Activated B cell treated with CpG ODN at 0.5 μM for 24 hours (primary cell): ENCODE measurements at regions of chr6 and their contacts with region 1.

Region 1: GRCh38 chr6:85678602-85679444 is 36.1 kb upstream of the SYNCRIP start:
- DNase-seq: peak; percentile 96
- ATAC-seq: peak; percentile 87
- H3K4me3 Mint-ChIP-seq: peak overlapping the region; percentile 99
- H3K27ac Mint-ChIP-seq: peak overlapping the region; percentile 98
- H3K4me1 Mint-ChIP-seq: peaks cover 48% of the 10 kb centered on the region
- H3K27me3 Mint-ChIP-seq: no peaks in the 10 kb centered on the region
- CTCF ChIP-seq: no peak

Region 2: DNA sequence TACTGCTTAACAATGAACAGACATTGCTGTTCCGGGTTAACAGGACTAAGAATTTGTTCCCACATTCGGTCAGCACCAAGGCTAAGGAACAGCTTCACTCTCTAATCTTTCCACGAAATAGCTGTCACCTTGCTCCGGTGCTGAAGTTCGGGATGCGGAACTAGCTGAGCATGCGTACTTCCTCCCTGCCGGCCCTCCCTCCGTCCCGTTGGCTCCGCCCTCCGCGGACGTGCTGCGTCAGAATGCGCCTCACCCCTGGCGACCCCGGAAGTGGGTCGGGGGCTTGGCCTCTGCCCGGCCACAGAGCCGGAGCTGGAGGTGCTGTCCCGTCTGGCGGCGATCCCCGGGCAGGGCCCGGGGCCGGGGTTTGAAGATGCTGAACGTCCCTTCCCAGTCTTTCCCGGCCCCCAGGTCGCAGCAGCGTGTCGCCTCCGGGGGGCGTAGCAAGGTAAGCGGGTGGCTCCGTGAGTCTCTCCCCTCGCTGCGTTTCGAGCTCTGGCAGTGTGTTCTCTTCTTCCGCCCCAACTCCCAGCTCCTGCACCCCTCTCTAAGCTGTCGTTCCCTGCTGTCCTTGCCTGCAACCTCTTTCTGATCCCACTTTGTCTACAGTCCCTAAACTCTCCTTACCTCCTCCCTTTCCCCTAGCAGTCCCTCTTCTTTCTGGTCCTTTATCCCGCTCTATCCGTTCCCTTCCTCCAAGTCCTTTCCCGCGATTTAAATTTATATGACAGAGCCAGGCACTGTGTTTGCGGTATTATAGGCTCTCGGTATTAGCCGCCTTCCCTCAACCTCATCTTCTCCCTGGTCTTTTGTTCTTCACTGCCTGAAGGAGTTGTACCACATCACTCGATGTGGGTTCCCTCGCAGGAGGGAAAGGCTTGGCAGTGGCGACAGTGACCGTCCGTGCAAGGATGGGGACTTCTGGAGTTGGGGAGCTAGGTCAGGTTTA is 1819.1 kb before region 1 on chr6 and contains the start of gene CYB5R4:
- CTCF ChIA-PET with region 1: no interaction called
- POLR2A ChIA-PET with region 1: interaction called, 6 read pairs
- intact Hi-C with region 1: loop called (anchors 2 kb)
- DNase-seq: peak; percentile 93
- ATAC-seq: peak; percentile 97
- H3K4me3 Mint-ChIP-seq: peak within 1 kb of the TSS; percentile 98
- H3K27ac Mint-ChIP-seq: peak within 1 kb of the TSS; percentile 86
- H3K4me1 Mint-ChIP-seq: peaks cover 50% of the 10 kb centered on the region
- H3K27me3 Mint-ChIP-seq: peaks cover 13% of the 10 kb centered on the region
- CTCF ChIP-seq: no peak
- total RNA-seq, gene CYB5R4: 35.7 and 37.3 TPM in 2 replicates

Region 3: DNA sequence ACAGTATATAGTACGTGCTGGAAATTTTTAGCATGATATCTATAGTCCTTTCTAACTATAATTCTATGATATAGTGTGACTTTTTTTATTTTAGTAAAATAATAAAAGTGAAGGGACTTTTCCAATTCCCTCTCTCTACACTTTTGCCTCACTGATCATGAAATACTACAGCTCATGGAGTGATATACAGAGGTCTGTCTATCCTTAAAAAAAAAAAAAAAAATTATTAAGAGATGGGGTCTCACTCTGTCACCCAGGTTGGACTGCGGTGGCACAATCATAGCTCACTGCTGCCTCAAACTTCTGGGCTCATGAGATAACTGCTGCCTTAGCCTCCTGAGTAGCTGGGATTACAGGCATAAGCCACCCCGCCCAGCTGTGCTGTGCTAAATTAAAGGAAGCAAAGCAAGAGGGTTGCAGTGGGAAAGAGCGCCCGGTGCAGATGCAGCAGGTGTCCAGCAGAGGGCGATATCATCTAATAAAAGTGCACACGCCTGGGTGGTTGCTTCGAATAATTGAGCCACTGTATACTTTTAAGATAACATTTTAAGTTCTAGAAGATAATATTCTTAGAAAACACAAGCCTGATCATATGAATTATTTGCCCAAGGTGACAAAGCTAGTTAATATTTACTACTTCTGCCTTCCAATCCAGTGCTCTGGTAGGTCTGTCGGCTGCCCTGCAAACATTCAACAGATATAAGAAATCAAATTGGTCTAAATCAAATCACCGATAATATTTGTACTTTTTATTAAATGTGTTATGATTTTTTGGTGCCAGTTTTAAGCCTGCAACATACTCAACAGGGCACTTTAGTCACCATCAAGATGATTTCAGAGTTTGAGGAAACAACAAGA is 323.8 kb before region 1 on chr6:
- CTCF ChIA-PET with region 1: interaction called, 4 read pairs
- POLR2A ChIA-PET with region 1: no interaction called
- intact Hi-C with region 1: loop called (anchors 5 kb)
- DNase-seq: peak; percentile 43
- ATAC-seq: peak; percentile 68
- H3K4me3 Mint-ChIP-seq: no peak overlapping the region
- H3K27ac Mint-ChIP-seq: no peak overlapping the region
- H3K4me1 Mint-ChIP-seq: no peaks in the 10 kb centered on the region
- H3K27me3 Mint-ChIP-seq: peaks cover 6% of the 10 kb centered on the region
- CTCF ChIP-seq: peak; percentile 92

Region 4: GRCh38 chr6:85537055-85537494 is 141.7 kb before region 1 on chr6:
- CTCF ChIA-PET with region 1: interaction called, 4 read pairs
- POLR2A ChIA-PET with region 1: interaction called, 8 read pairs
- intact Hi-C with region 1: loop called (anchors 2 kb)
- DNase-seq: no peak
- ATAC-seq: no peak
- H3K4me3 Mint-ChIP-seq: no peak overlapping the region
- H3K27ac Mint-ChIP-seq: no peak overlapping the region
- H3K4me1 Mint-ChIP-seq: no peaks in the 10 kb centered on the region
- H3K27me3 Mint-ChIP-seq: no peaks in the 10 kb centered on the region
- CTCF ChIP-seq: peak; percentile 94

Region 5: GRCh38 chr6:85620308-85620707 is 58.5 kb before region 1 on chr6:
- CTCF ChIA-PET with region 1: no interaction called
- POLR2A ChIA-PET with region 1: interaction called, 7 read pairs
- intact Hi-C with region 1: loop called (anchors 10 kb)
- DNase-seq: no peak
- ATAC-seq: no peak
- H3K4me3 Mint-ChIP-seq: no peak overlapping the region
- H3K27ac Mint-ChIP-seq: no peak overlapping the region
- H3K4me1 Mint-ChIP-seq: peaks cover 8% of the 10 kb centered on the region
- H3K27me3 Mint-ChIP-seq: no peaks in the 10 kb centered on the region
- CTCF ChIP-seq: no peak

Region 6: DNA sequence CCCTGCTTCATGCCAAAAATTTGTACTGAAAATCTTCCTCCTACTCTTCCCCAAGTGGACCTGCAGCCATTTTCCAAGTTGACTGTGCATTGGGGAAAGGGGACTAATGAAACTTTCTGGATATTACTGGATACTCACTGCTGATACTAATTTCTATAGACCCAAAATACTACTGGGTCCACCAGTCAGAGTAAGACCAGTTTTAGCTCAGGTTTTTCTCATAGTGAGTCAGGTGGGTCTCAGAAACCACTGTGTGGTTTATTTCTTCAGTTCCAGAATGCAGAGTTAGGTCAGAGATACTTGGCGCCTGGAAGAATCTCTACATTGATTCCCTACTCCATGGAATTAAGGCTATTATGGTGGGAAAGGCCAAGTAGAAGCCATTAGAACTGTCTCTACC is 238.7 kb after region 1 on chr6:
- CTCF ChIA-PET with region 1: no interaction called
- POLR2A ChIA-PET with region 1: no interaction called
- intact Hi-C with region 1: no loop called
- DNase-seq: no peak
- ATAC-seq: no peak
- H3K4me3 Mint-ChIP-seq: no peak overlapping the region
- H3K27ac Mint-ChIP-seq: no peak overlapping the region
- H3K4me1 Mint-ChIP-seq: no peaks in the 10 kb centered on the region
- H3K27me3 Mint-ChIP-seq: peaks cover 2% of the 10 kb centered on the region
- CTCF ChIP-seq: no peak